ENCODE measurements at regions of chr1 and their contacts with region 1.

Region 1: DNA sequence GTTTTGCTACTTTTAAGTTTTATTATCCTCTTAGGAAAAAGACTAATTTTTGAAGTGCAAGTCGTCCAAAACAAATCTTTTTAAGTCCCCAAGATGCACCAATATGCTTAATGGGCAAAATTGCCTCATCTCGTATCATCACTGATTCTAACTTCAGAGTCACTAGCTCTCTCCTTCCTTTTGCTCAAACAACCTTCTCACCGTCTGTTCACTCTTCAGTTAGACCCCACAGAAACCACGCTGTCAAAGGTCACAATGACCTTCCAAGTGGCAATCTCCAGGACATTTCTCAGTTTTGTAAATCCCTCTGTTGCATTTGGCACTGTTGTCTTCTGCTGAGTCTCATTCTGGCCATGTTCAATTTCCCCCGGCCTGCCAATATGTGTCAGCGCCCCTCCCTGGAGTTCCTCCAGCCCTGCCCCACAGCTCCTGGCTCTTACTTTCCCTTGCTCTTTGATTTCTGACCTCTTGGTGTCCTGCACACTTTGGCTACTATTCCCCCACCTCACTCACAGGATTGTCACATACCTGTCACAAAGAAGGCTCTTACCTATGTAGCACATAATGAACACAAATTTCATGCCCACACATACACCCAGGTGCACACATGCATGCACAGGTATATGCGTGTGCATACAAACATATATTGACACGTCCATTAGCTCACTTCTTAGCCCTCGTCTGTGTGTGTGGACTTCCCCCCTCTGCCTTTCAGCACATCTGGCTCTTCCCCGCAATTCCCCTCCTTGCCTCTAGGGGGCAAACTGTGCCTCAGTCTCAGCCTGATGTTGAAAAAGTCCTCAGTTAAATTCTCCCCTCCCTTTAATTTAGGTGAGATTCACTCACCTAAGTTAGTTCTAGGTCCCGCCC is 354.0 kb upstream of the DUSP10 start:
- DNase-seq: peak; percentile 77
- H3K4me3 Mint-ChIP-seq: no peak overlapping the region
- H3K27ac Mint-ChIP-seq: no peak overlapping the region
- H3K4me1 Mint-ChIP-seq: no peaks in the 10 kb centered on the region
- H3K27me3 Mint-ChIP-seq: no peaks in the 10 kb centered on the region

Region 2: DNA sequence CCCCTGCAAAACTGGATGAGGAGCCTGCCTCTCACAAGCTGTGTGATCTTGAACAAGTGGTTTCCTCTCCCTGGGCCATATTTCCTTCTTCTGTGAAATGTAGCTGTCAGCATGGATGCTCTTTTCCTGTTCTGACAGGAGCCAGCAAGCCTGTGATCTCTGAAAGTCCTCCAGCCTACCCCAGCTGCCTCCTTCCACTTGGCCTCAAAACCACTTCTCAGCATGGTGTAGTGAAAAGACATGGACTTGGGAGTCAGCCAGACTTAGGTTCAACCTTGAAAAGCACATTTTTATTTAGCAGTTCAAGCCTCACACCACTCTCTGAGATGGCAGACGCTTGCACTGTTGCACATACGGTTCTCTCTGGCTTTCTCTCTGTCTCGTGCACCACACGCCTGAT is 61.1 kb before region 1 on chr1:
- CTCF ChIA-PET with region 1: no interaction called
- intact Hi-C with region 1: no loop called
- DNase-seq: no peak
- H3K4me3 Mint-ChIP-seq: no peak overlapping the region
- H3K27ac Mint-ChIP-seq: no peak overlapping the region
- H3K4me1 Mint-ChIP-seq: no peaks in the 10 kb centered on the region
- H3K27me3 Mint-ChIP-seq: peaks cover 5% of the 10 kb centered on the region

Region 3: GRCh38 chr1:222064388-222065211 is 31.2 kb before region 1 on chr1:
- CTCF ChIA-PET with region 1: no interaction called
- intact Hi-C with region 1: no loop called
- DNase-seq: no peak
- H3K4me3 Mint-ChIP-seq: no peak overlapping the region
- H3K27ac Mint-ChIP-seq: no peak overlapping the region
- H3K4me1 Mint-ChIP-seq: no peaks in the 10 kb centered on the region
- H3K27me3 Mint-ChIP-seq: no peaks in the 10 kb centered on the region

Region 4: DNA sequence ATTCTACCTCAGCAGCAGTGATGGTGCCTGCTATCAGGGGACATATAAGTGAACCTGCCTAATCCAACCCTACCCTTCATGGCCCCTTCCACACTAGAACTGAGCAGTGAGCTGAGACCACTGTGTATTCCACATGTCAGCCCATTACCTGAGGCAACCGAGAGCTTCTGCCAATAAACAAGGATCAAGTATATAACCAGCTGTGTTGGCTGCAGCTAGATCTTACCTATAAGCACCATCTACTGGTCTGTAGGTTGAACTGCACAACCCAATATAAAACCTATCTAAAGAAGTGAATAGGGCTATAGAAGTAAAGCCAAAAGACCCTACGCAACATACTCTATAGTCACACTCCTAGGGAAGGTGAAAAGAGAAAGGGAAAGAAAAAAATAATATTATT is 75.2 kb after region 1 on chr1:
- CTCF ChIA-PET with region 1: interaction called, 6 read pairs
- intact Hi-C with region 1: loop called (anchors 1 kb)
- DNase-seq: no peak
- H3K4me3 Mint-ChIP-seq: no peak overlapping the region
- H3K27ac Mint-ChIP-seq: no peak overlapping the region
- H3K4me1 Mint-ChIP-seq: no peaks in the 10 kb centered on the region
- H3K27me3 Mint-ChIP-seq: no peaks in the 10 kb centered on the region

Region 5: DNA sequence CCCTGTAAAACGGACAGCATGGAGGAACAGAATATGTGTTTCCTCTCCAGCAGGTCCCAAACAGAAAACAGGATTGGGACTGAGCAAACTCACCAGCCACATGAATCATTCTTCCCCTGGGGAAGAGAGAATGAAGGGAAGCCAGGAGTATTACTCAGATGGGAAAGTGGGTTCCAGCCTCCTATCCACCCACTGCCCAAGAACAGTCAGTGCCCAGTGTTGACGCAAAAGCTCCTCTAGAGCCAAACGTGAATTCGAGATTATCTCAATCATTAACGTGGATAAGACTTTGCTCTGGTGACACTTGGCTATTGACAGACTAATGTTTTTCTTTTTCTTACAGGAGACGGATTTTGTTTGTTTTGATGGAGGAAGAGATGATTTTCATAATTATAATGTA is 531.4 kb after region 1 on chr1:
- CTCF ChIA-PET with region 1: no interaction called
- intact Hi-C with region 1: loop called (anchors 10 kb)
- DNase-seq: no peak
- H3K4me3 Mint-ChIP-seq: no peak overlapping the region
- H3K27ac Mint-ChIP-seq: no peak overlapping the region
- H3K4me1 Mint-ChIP-seq: peaks cover 2% of the 10 kb centered on the region
- H3K27me3 Mint-ChIP-seq: no peaks in the 10 kb centered on the region

Measured in activated naive CD4-positive, alpha-beta T cell treated with anti-CD3 and anti-CD28 coated beads for 36 hours (primary cell).